HepG2 (cell line): ENCODE measurements at regions of chr1 and their contacts with region 1.

Region 1: GRCh38 chr1:147599362-147600118 is 58.2 kb downstream of the BCL9 start:
- DNase-seq: peak; percentile 81
- ATAC-seq: peak; percentile 94
- H3K4me3 ChIP-seq: peak overlapping the region; percentile 65 to 91 (median 81)
- H3K27ac ChIP-seq: peak overlapping the region; percentile 74
- H3K4me1 ChIP-seq: peaks cover 34% of the 10 kb centered on the region
- H3K27me3 ChIP-seq: peaks cover 0 to 10% of the 10 kb centered on the region in 2 experiments; a peak in 1 of 5 replicates
- CTCF ChIP-seq: no peak
- EP300 ChIP-seq: no peak
- POLR2A ChIP-seq: peak; percentile 66 to 88; a peak in 3 of 4 replicates
- RAD21 ChIP-seq: no peak

Region 2: DNA sequence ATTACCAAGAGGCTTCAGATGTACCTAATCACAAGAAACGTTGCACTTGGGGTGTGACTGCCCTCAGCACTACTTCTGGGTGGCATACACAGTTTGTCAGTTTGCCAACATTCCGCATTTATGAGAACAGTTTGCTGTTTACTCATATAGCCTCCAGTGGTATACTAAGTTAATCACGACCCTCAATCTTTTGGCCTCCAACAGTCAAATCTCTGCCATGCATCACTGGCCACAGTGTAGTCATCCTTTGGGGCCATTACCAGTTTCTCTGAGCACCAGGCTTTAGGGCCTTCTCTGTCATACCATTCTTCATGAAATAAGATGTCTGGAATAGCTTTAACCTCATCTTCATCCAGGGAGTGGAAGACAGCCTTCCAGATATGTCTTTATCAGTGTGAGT is 121.0 kb before region 1 on chr1:
- CTCF ChIA-PET with region 1: no interaction called
- POLR2A ChIA-PET with region 1: no interaction called
- in situ Hi-C with region 1: no loop called
- intact Hi-C with region 1: no loop called
- DNase-seq: no peak
- ATAC-seq: no peak
- H3K4me3 ChIP-seq: no peak overlapping the region
- H3K27ac ChIP-seq: no peak overlapping the region
- H3K4me1 ChIP-seq: peaks cover 18% of the 10 kb centered on the region
- H3K27me3 ChIP-seq: no peaks in the 10 kb centered on the region
- CTCF ChIP-seq: no peak
- EP300 ChIP-seq: no peak
- POLR2A ChIP-seq: no peak
- RAD21 ChIP-seq: no peak

Region 3: GRCh38 chr1:147541672-147542568 is 57.6 kb before region 1 on chr1:
- CTCF ChIA-PET with region 1: no interaction called
- POLR2A ChIA-PET with region 1: interaction called, 16 read pairs
- in situ Hi-C with region 1: no loop called
- intact Hi-C with region 1: no loop called
- DNase-seq: no peak
- ATAC-seq: peak; percentile 55
- H3K4me3 ChIP-seq: peak overlapping the region in 2 of 3 experiments; percentile 38 to 58; a peak in 2 of 6 replicates
- H3K27ac ChIP-seq: no peak overlapping the region
- H3K4me1 ChIP-seq: peaks cover 29% of the 10 kb centered on the region
- H3K27me3 ChIP-seq: peaks cover 0 to 13% of the 10 kb centered on the region in 2 experiments; a peak in 2 of 5 replicates
- CTCF ChIP-seq: no peak
- EP300 ChIP-seq: no peak
- POLR2A ChIP-seq: no peak
- RAD21 ChIP-seq: no peak

Region 4: GRCh38 chr1:147565189-147565980 is 34.2 kb before region 1 on chr1:
- CTCF ChIA-PET with region 1: no interaction called
- POLR2A ChIA-PET with region 1: no interaction called
- in situ Hi-C with region 1: no loop called
- intact Hi-C with region 1: no loop called
- DNase-seq: no peak
- ATAC-seq: no peak
- H3K4me3 ChIP-seq: no peak overlapping the region
- H3K27ac ChIP-seq: no peak overlapping the region
- H3K4me1 ChIP-seq: no peaks in the 10 kb centered on the region
- H3K27me3 ChIP-seq: peaks cover 2 to 3% of the 10 kb centered on the region in 2 experiments; a peak in 2 of 5 replicates
- CTCF ChIP-seq: no peak
- EP300 ChIP-seq: no peak
- POLR2A ChIP-seq: no peak
- RAD21 ChIP-seq: no peak

Region 5: DNA sequence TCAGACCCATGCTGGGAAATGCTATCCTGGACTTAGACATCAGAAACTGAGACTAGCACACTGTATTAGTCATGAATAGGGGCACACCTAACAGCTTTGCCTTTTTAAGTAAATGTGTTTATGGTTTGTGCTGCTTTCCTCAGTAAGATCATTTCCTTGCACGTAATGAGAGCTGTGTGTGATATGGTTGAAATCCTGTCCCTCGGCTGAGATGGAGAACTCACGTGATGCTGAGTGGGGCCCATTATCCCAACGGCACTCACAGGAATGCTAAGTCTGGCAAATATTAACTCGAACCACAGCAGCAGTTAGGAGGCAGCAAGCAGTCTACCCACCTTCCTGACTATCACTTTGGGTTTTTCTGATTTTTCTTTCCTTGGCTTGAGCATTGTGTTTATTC is 20.0 kb before region 1 on chr1:
- CTCF ChIA-PET with region 1: no interaction called
- POLR2A ChIA-PET with region 1: interaction called, 14 read pairs
- in situ Hi-C with region 1: no loop called
- intact Hi-C with region 1: no loop called
- DNase-seq: peak; percentile 73
- ATAC-seq: peak; percentile 99
- H3K4me3 ChIP-seq: peak overlapping the region in 2 of 3 experiments; percentile 23 to 30; a peak in 2 of 6 replicates
- H3K27ac ChIP-seq: no peak overlapping the region
- H3K4me1 ChIP-seq: peaks cover 29% of the 10 kb centered on the region
- H3K27me3 ChIP-seq: no peaks in the 10 kb centered on the region
- CTCF ChIP-seq: no peak
- EP300 ChIP-seq: peak in 1 of 2 experiments; percentile 38; a peak in 1 of 4 replicates
- POLR2A ChIP-seq: no peak
- RAD21 ChIP-seq: no peak

Region 6: GRCh38 chr1:147611021-147611426 is 11.5 kb after region 1 on chr1:
- CTCF ChIA-PET with region 1: no interaction called
- POLR2A ChIA-PET with region 1: interaction called, 27 read pairs
- in situ Hi-C with region 1: no loop called
- intact Hi-C with region 1: no loop called
- DNase-seq: no peak
- ATAC-seq: no peak
- H3K4me3 ChIP-seq: no peak overlapping the region
- H3K27ac ChIP-seq: no peak overlapping the region
- H3K4me1 ChIP-seq: peaks cover 33% of the 10 kb centered on the region
- H3K27me3 ChIP-seq: no peaks in the 10 kb centered on the region
- CTCF ChIP-seq: no peak
- EP300 ChIP-seq: no peak
- POLR2A ChIP-seq: no peak
- RAD21 ChIP-seq: no peak

Region 7: DNA sequence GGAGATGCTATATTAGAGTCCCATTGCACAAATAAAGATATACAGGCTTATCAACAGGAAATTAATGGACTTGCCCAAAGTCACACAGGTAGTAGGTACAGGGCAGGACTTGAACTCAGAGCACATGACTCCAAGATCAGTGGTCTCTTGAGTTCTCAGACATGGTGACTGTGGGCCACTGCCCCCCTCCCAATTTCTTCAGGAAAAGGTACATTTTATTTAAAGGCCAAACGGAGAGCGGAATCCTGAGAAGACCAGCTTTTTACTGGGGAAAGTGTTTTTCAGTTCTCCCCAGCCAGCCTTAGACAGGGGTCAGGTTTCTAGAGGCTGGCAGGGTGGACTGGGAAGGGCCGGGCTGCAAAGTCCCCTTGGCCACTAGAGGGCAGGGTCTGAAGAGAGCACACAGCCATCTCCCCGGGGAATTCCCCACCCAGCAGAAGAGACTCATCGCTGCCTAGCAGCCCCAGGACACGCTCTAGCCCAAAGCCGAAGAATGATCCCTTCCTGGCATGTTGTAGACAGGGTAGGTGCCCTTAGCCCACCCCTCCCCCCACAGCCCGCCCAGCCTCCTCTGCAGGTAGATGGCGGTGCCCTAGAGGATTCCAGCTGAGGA is 41.1 kb after region 1 on chr1:
- CTCF ChIA-PET with region 1: interaction called, 5 read pairs
- POLR2A ChIA-PET with region 1: no interaction called
- in situ Hi-C with region 1: no loop called
- intact Hi-C with region 1: loop called (anchors 1 kb)
- DNase-seq: peak; percentile 65
- ATAC-seq: peak; percentile 96
- H3K4me3 ChIP-seq: no peak overlapping the region
- H3K27ac ChIP-seq: no peak overlapping the region
- H3K4me1 ChIP-seq: peaks cover 40% of the 10 kb centered on the region
- H3K27me3 ChIP-seq: no peaks in the 10 kb centered on the region
- CTCF ChIP-seq: peak; percentile 87
- EP300 ChIP-seq: no peak
- POLR2A ChIP-seq: no peak
- RAD21 ChIP-seq: peak; percentile 63; the same call in 1 of the 2 replicates

Region 8: DNA sequence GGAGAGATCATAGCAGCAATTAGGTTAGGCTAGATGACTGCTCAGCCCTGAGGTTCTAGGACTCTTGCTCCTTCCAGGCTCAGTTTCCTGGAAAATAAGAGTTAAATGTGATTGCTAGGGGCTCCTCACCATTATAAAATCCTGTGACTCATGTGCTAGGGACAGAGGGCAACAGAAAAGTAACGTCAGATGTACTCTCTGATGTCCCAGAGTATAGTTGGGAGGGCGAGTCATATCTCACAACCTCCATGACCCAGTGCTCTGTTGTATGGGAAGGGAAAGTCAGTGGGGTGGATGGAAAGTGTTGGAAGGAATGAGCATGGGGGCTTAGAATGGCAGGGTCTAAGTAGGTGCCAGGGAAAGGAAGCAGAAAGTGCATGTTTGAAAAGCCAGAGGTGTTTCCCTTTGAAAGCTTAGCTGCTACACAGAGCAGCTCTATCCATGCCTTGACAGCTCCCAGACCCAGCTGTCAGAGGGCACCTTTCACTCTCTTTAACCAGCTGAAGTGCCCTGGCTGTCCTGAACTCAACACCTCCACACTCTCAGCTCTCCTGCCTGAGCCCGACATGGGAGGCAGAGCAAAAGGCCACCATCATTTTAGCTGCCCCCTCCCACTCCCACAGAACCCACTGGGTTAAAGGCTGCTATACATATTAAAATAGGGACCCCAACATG is 149.3 kb after region 1 on chr1:
- CTCF ChIA-PET with region 1: no interaction called
- POLR2A ChIA-PET with region 1: no interaction called
- in situ Hi-C with region 1: no loop called
- intact Hi-C with region 1: no loop called
- DNase-seq: no peak
- ATAC-seq: no peak
- H3K4me3 ChIP-seq: no peak overlapping the region
- H3K27ac ChIP-seq: no peak overlapping the region
- H3K4me1 ChIP-seq: no peaks in the 10 kb centered on the region
- H3K27me3 ChIP-seq: peaks cover 0 to 3% of the 10 kb centered on the region in 2 experiments; a peak in 1 of 5 replicates
- CTCF ChIP-seq: no peak
- EP300 ChIP-seq: no peak
- POLR2A ChIP-seq: no peak
- RAD21 ChIP-seq: no peak

Region 9: DNA sequence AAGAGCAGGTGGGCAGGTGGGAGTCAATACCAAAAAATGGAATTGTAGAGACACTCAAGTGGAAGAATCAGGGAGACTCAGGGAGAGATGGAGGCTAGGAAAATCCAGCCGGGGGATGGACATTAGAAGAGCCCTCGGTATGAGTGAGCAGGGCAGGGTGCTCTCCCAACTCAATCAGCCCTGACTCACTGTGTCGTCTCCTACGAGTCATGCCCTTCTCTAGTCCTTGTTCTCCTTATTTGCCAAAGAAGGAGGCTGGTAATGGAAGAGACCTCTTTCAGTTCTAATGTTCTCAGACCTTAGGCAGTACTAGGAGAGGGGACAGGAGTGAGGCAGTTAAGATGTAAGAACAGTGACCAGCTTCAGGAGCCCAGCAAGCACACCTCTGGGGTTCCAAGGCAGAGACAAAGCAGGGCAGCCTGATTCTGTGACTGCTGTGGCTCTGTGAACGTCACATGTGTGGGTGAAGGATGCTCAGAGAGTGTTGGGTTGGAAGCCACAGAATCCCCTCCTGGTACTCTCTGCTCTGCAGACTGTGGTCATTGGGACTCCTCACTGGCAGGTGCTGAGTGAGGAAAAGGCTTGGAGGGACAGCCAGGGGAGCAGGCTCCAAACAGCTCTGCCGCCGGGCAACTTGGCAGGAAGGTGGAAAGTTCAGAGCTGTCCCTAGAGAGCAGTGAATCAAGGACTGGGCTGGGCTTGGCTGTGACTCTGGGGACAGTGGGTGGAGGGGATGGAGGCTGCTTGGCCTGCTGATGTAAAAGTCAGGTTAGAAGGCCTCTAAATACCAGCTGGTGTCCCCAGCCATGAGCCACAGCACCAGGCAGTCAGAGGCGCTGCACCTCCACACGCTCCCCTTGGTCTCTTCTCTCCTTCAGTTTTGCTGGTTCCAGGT is 171.9 kb after region 1 on chr1:
- CTCF ChIA-PET with region 1: no interaction called
- POLR2A ChIA-PET with region 1: no interaction called
- in situ Hi-C with region 1: no loop called
- intact Hi-C with region 1: no loop called
- DNase-seq: no peak
- ATAC-seq: no peak
- H3K4me3 ChIP-seq: no peak overlapping the region
- H3K27ac ChIP-seq: no peak overlapping the region
- H3K4me1 ChIP-seq: no peaks in the 10 kb centered on the region
- H3K27me3 ChIP-seq: peaks cover 3 to 25% of the 10 kb centered on the region in 2 experiments; a peak in 3 of 5 replicates
- CTCF ChIP-seq: no peak
- EP300 ChIP-seq: no peak
- POLR2A ChIP-seq: no peak
- RAD21 ChIP-seq: no peak